ENCODE measurements at regions of chr7 and their contacts with region 1.

Region 1: GRCh38 chr7:95476904-95477594 is 8.7 kb upstream of the ASB4 start:
- DNase-seq: peak; percentile 58
- ATAC-seq: peak; percentile 36
- H3K4me3 Mint-ChIP-seq: no peak overlapping the region; the same call in 1 of the 2 replicates
- H3K27ac Mint-ChIP-seq: no peak overlapping the region
- H3K4me1 Mint-ChIP-seq: peaks cover 20% of the 10 kb centered on the region
- H3K27me3 Mint-ChIP-seq: no peaks in the 10 kb centered on the region
- CTCF ChIP-seq: no peak

Region 2: DNA sequence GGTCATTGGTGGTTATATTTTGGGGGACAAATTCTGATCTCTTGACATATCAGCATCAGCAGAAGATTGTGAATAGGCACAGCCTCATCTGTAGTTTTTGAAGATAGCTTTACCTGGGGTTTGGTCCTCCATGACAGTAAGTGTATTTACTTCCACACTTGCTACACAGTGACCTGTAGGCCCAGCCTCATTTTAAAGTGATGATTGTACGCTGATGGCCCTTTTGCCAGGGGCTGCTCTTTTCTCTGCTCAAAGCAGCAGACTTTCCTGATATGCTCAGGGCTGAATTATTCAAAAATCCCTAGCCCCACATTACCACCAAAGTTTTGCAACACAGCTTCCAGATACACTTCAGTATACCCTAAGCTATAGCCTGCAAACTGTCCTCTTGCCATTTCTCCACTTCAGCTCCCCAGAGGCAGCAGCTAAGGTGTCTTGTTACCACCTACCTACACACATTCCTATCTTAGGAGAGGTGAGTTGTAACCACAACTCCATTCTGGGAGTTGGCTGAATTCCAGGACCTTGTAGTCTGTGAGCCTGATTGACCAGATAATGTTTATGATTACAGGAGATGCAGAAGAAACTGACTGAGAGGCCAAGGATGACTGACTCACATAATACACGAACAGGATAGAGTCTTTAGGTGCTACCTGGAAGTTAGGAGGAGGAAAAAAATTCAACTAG is 14.7 kb after region 1 on chr7:
- CTCF ChIA-PET with region 1: interaction called, 17 read pairs
- POLR2A ChIA-PET with region 1: no interaction called
- DNase-seq: no peak
- ATAC-seq: peak; percentile 93
- H3K4me3 Mint-ChIP-seq: no peak overlapping the region
- H3K27ac Mint-ChIP-seq: no peak overlapping the region
- H3K4me1 Mint-ChIP-seq: peaks cover 22% of the 10 kb centered on the region
- H3K27me3 Mint-ChIP-seq: no peaks in the 10 kb centered on the region
- CTCF ChIP-seq: no peak

Measured in WTC11 (cell line).